Activated T-helper 1 cell treated with anti-CD3 and anti-CD28 coated beads, Interleukin-12 subunit alpha, Interleukin-12 subunit beta, Interleukin-2, Interleukin-4 antibody, amounts not matched to agents 30 ng/mL and 10 ng/mL and 1 ng/mL, durations not matched to agents 14 hours and 24 hours and 36 hours (primary cell): ENCODE measurements at regions of chr3 and their contacts with region 1.

Region 1: DNA sequence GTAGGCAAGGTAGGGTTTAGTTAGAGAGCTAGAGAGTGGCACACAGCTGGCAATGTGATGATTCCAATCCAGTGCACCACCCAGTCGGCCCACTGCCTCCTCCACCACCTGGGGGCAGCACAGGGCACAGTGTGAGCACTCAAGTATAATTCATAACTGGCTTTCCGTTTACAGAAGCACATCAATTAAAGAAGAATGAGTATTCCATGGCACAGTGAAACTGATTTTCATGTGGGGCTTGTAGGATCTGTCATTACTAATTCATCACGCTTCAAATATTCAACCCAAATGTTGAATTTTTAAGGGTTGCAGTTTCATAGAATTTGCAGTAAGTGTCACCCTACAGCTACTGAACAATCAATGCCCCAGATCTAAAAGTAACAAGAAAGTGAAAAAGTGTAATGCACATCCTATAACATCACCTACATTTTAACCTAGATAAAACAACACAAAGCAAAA is 149.9 kb downstream of the IGSF11 start:
- DNase-seq: peak; percentile 57
- H3K4me3 Mint-ChIP-seq: no peak overlapping the region
- H3K27ac Mint-ChIP-seq: no peak overlapping the region
- H3K4me1 Mint-ChIP-seq: peaks cover 8% of the 10 kb centered on the region
- H3K27me3 Mint-ChIP-seq: peaks cover 6% of the 10 kb centered on the region

Region 2: GRCh38 chr3:118809696-118810498 is 74.9 kb before region 1 on chr3:
- intact Hi-C with region 1: no loop called
- DNase-seq: no peak
- H3K4me3 Mint-ChIP-seq: no peak overlapping the region
- H3K27ac Mint-ChIP-seq: no peak overlapping the region
- H3K4me1 Mint-ChIP-seq: no peaks in the 10 kb centered on the region
- H3K27me3 Mint-ChIP-seq: peaks cover 3% of the 10 kb centered on the region

Region 3: GRCh38 chr3:118951089-118951488 is 66.3 kb after region 1 on chr3:
- intact Hi-C with region 1: loop called (anchors 5 kb)
- DNase-seq: no peak
- H3K4me3 Mint-ChIP-seq: no peak overlapping the region
- H3K27ac Mint-ChIP-seq: no peak overlapping the region
- H3K4me1 Mint-ChIP-seq: peaks cover 21% of the 10 kb centered on the region
- H3K27me3 Mint-ChIP-seq: peaks cover 3% of the 10 kb centered on the region

Region 4: DNA sequence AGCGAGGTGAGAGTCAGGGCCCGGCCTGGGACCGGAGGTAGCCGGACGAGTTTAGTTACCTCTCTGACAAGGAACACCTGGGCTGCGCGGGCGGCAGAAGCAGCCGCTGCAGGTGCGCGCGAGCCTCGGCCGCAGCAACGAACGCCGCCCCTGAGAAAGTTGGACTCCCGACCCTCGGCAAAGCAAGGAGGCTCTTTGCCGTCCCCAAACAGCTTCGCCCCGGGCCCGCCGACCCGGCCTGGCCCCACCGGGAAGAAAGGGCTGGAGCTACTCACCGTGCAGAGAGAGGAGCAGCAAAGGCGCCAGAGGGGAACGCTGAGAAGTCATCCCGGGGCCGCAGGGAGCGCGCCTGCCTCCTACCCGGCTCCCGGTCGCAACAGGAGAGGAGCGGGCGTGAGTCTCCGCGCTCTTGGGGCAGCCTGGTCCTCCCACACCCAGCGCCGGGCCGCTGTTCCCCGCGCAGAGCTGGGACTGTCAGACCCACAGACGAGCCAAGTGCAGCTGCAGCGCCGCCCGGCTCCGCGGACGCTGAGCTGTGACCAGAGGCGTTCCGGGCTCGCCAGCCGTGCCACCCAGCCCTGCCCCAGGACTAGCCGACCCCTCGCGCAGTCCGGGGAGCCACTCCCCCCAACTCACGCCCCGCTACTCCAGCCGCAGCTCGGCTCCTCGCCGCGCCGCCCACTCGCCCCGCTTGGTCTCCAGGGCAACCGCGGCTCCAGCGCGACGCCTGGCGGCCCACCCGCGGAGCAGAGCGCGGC is 149.7 kb after region 1 on chr3 and contains the start of gene IGSF11:
- intact Hi-C with region 1: loop called (anchors 1 kb)
- DNase-seq: peak; percentile 46
- H3K4me3 Mint-ChIP-seq: peak within 1 kb of the TSS; percentile 83
- H3K27ac Mint-ChIP-seq: no peak within 1 kb of the TSS
- H3K4me1 Mint-ChIP-seq: peaks cover 6% of the 10 kb centered on the region
- H3K27me3 Mint-ChIP-seq: peaks cover 54% of the 10 kb centered on the region
- total RNA-seq, gene IGSF11: 0.18 TPM in 1 of 2 replicates, not detected in the other

Region 5: GRCh38 chr3:119098619-119099222 is 213.9 kb after region 1 on chr3:
- intact Hi-C with region 1: loop called (anchors 1 kb)
- DNase-seq: no peak
- H3K4me3 Mint-ChIP-seq: no peak overlapping the region
- H3K27ac Mint-ChIP-seq: no peak overlapping the region
- H3K4me1 Mint-ChIP-seq: no peaks in the 10 kb centered on the region
- H3K27me3 Mint-ChIP-seq: peaks cover 2% of the 10 kb centered on the region

Region 6: DNA sequence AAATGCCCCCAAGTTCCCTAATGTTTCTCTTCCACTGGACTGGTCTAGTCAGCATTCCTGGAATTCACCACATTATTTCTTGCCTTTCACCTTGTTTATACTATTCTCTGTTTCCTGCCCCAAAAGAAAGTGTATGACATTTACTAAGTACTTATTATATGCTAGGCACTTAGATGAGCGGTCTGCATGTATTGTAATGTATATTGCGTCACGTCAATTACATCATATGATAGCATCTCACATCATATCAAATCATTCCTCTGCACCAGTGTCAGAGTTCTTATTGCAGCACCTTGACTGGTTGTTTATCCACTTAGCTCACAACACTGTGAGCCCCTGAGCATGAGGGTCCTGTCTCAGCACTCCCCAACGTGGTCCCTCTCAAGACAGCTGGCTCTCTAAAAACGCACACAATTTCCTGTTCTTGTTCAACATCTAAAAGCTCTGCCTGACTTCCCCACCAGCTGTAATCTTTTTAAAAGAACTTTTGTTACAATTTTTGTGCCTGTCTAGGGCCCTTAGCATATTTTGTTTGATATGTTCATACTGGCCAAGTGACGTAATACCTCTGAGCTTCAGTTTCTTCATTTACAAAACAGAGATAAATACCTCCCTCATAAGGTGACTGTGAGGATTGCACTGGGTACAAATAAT is 468.2 kb after region 1 on chr3:
- intact Hi-C with region 1: loop called (anchors 5 kb)
- DNase-seq: no peak
- H3K4me3 Mint-ChIP-seq: no peak overlapping the region
- H3K27ac Mint-ChIP-seq: no peak overlapping the region
- H3K4me1 Mint-ChIP-seq: peaks cover 19% of the 10 kb centered on the region
- H3K27me3 Mint-ChIP-seq: peaks cover 28% of the 10 kb centered on the region